Heart left ventricle (tissue), 16 donors: ENCODE measurements at regions of chr18 and their contacts with region 1.

Region 1: DNA sequence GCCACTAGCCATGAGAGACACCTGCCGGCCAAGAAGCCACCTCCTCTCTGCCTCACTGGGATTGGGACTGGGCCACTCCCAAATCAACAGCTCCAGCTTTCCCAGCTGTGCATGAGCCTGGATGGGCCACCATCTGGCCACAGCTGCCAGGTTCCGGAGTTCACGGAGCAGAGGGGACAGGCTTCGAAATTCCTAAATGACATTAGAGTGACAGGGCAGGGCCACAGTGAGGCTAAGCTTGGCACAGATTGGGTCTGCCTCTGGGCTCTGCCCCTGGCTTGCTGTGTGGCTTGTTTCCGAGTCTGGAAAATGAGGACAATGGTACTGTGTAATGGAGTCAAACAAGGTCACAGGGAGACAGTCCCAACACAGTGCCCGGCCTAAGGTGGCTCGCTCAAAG is 6.5 kb downstream of the DIPK1C start:
- DNase-seq: peak in 4 of 5 donors; percentile 26 to 71 (median 48)
- ATAC-seq: peak; percentile 72 to 85 (median 76)
- H3K4me3 ChIP-seq: no peak overlapping the region
- H3K27ac ChIP-seq: peak overlapping the region in 10 of 12 donors; percentile 31 to 73 (median 62)
- H3K4me1 ChIP-seq: peaks cover 0 to 53% (median 31%) of the 10 kb centered on the region in 12 donors
- H3K27me3 ChIP-seq: peaks cover 0 to 23% (median 2%) of the 10 kb centered on the region in 9 donors
- CTCF ChIP-seq: peak in 1 of 12 donors; percentile 8
- POLR2A ChIP-seq: no peak

Region 2: DNA sequence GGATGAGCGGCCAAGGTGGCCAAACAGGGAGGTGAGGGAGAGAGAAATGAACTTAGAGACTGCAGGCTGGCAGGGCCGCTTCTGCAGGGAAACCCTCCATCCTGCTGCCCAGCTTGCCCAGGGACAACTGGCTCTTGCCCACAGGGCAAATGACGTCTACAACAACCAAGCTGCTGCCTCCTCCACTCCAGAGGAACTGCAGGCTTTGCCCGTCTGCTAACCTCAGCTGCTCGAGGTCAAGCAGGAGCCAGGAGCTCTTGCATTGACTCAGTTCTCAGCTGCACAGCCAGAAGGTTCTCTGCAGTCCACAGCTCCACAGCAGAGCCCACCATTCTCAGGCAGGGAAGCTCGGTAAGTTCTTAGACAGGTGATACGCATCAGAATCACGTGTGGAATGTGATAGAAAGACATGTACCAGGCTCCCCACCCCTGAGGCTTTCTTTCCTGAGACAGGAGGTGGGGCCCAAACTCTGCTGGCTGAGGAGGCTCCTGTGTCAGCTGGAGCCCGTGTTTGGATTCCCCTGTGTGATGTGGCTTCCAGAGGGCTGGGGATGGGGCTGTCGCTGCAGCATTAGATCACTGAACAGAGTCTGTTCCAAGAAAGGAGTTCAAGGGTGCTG is 21.6 kb before region 1 on chr18:
- intact Hi-C with region 1: loop called in 1 of 10 experiments (anchors 2 kb)
- DNase-seq: no peak
- ATAC-seq: no peak
- H3K4me3 ChIP-seq: no peak overlapping the region
- H3K27ac ChIP-seq: no peak overlapping the region
- H3K4me1 ChIP-seq: no peaks in the 10 kb centered on the region
- H3K27me3 ChIP-seq: no peaks in the 10 kb centered on the region
- CTCF ChIP-seq: no peak
- POLR2A ChIP-seq: no peak

Region 3: DNA sequence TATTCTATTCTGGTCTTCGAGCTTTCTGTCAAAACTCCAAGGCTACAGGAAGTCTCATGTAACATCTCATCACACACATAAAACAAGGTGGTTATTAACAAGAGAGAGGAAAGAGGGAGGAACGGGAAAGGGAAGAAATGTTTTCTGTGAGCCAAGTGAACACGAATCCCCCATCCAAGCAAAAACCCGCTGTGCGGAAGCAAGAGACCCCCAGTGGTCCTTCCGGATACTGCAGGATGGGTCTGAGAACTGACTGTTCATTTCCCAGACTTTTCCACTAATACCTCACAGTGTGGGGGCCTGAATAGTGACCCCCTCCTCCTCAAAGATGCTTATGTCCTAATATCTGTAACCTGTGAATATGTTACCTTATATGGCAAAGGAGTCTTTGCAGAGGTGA is 25.5 kb after region 1 on chr18:
- intact Hi-C with region 1: loop called in 1 of 10 experiments (anchors 1 kb)
- DNase-seq: peak in 3 of 5 donors; percentile 47 to 57 (median 57)
- ATAC-seq: peak in 3 of 4 donors; percentile 41 to 67 (median 64)
- H3K4me3 ChIP-seq: no peak overlapping the region
- H3K27ac ChIP-seq: no peak overlapping the region
- H3K4me1 ChIP-seq: peaks cover 0 to 27% (median 0%) of the 10 kb centered on the region in 12 donors
- H3K27me3 ChIP-seq: no peaks in the 10 kb centered on the region
- CTCF ChIP-seq: peak; percentile 58 to 86 (median 78)
- POLR2A ChIP-seq: no peak

Region 4: DNA sequence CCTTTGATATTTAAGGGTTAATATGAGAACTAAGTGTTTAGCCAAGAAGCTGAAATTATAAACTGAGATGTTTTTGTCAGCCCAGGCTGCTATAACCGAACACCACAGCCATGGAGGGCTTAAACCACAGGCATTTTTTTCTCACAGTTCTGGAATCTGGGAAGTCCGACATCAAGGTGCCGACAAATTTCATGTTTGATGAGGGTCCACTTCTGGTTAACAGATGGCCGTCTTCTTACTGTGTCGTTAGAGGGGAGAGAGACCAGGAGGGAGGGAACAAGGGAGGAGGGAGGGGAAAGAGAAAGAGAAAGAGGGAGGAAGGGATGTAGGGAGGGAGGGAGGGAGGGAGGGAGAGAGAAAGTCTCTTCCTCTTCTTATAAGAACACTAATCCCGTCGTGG is 39.0 kb after region 1 on chr18:
- intact Hi-C with region 1: loop called in 3 of 10 experiments (anchors 5 kb)
- DNase-seq: no peak
- ATAC-seq: no peak
- H3K4me3 ChIP-seq: peak overlapping the region in 1 of 12 donors; percentile 13
- H3K27ac ChIP-seq: no peak overlapping the region
- H3K4me1 ChIP-seq: peaks cover 0 to 19% (median 7%) of the 10 kb centered on the region in 12 donors
- H3K27me3 ChIP-seq: no peaks in the 10 kb centered on the region
- CTCF ChIP-seq: no peak
- POLR2A ChIP-seq: no peak